ENCODE measurements at regions of chr5 and their contacts with region 1.

Region 1: GRCh38 chr5:14871210-14872069 is at the start of gene ANKH:
- DNase-seq: no peak
- H3K4me3 ChIP-seq: peak within 1 kb of the TSS; percentile 84
- H3K27me3 ChIP-seq: no peaks in the 10 kb centered on the region
- CTCF ChIP-seq: no peak
- polyA plus RNA-seq, gene ANKH: 37.7 and 65.3 TPM in 2 replicates

Region 2: DNA sequence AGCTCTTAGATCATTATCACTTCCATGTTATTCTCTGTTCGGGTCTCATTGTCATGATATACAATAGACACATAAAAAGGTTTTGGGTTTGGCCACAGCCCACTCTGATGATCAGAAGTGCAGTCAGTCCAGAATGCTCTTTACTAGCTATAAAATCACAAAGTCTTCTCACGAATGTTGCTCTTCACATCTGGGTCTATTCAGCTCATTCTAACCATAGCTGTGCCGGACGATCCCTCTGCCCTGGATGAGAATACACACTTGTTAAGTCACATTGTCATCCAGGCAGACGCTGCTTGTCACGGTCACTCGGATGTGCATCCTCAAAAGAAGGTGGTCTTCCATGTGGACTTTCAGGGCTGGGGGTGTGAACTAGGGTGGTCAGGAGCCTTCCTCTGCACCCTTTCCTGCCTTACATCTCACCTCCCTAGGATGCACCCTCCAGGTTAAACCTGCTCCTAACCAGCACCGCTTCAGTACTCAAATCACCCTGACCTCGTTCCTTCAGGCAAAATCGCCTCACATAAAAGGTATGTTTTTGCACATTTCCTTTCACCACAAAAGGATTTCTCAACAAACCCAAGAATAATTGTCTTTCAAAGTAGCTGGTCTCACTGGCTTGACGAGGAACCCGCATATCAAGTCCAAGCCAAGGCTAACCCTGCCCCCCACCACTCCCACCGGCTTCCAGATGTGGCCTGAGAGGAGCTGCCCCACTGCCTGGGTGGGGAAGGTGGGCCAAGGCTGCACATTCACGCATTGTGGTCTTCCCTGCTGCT is 21.7 kb before region 1 on chr5:
- CTCF ChIA-PET with region 1: interaction called, 14 read pairs
- POLR2A ChIA-PET with region 1: interaction called, 10 read pairs
- DNase-seq: peak; percentile 26
- H3K4me3 ChIP-seq: no peak overlapping the region
- H3K27me3 ChIP-seq: no peaks in the 10 kb centered on the region
- CTCF ChIP-seq: no peak

Region 3: GRCh38 chr5:14920121-14920520 is 48.7 kb after region 1 on chr5:
- CTCF ChIA-PET with region 1: no interaction called
- POLR2A ChIA-PET with region 1: no interaction called
- DNase-seq: no peak
- H3K4me3 ChIP-seq: no peak overlapping the region
- H3K27me3 ChIP-seq: no peaks in the 10 kb centered on the region
- CTCF ChIP-seq: no peak

Region 4: GRCh38 chr5:14958196-14958595 is 86.8 kb after region 1 on chr5:
- CTCF ChIA-PET with region 1: no interaction called
- POLR2A ChIA-PET with region 1: no interaction called
- DNase-seq: no peak
- H3K4me3 ChIP-seq: no peak overlapping the region
- H3K27me3 ChIP-seq: peaks cover 3% of the 10 kb centered on the region; the same call in 1 of the 2 replicates
- CTCF ChIP-seq: no peak